Left ventricle myocardium superior (tissue), 1 donor: ENCODE measurements at regions of chr9 and their contacts with region 1.

Region 1: GRCh38 chr9:5450359-5451091 is at the start of gene CD274:
- DNase-seq: peak; percentile 96
- ATAC-seq: peak; percentile 99
- total RNA-seq, gene CD274: 10.9 TPM

Region 2: DNA sequence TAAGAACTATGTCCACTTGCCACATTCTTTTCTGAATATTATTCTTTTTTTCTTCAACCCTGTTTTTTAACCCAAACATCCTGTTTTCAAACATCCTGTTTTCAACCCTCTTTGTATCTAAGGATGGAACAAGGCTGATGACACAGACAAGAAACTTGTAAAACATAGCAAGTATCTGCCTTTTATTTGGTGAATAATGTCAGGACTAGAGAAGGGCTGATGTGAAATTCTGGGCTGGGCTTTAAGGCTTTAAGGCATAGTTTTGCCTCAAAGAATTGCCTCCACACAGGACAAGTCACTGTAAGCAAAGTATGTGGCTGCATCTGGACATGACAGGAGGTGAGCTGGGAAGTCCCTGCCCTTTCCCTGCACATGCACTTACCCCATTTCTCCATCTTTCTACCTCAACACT is 135.9 kb after region 1 on chr9:
- intact Hi-C with region 1: loop called (anchors 5 kb)
- DNase-seq: no peak
- ATAC-seq: no peak